Activated CD4-positive, alpha-beta T cell treated with anti-CD3 and anti-CD28 coated beads for 36 hours (primary cell): ENCODE measurements at regions of chr7 and their contacts with region 1.

Region 1: GRCh38 chr7:129144095-129144833 is at the start of gene TSPAN33:
- DNase-seq: peak; percentile 81
- ATAC-seq: peak; percentile 98
- H3K4me3 Mint-ChIP-seq: peak within 1 kb of the TSS; percentile 82
- H3K27ac Mint-ChIP-seq: no peak within 1 kb of the TSS
- H3K4me1 Mint-ChIP-seq: peaks cover 20% of the 10 kb centered on the region
- H3K27me3 Mint-ChIP-seq: peaks cover 16% of the 10 kb centered on the region
- total RNA-seq, gene TSPAN33: 6.5 to 7.5 TPM

Region 2: GRCh38 chr7:128718967-128719642 is 425.2 kb before region 1 on chr7:
- CTCF ChIA-PET with region 1: no interaction called
- POLR2A ChIA-PET with region 1: no interaction called
- intact Hi-C with region 1: no loop called
- DNase-seq: no peak
- ATAC-seq: peak; percentile 39
- H3K4me3 Mint-ChIP-seq: no peak overlapping the region
- H3K27ac Mint-ChIP-seq: no peak overlapping the region
- H3K4me1 Mint-ChIP-seq: peaks cover 3% of the 10 kb centered on the region
- H3K27me3 Mint-ChIP-seq: peaks cover 10% of the 10 kb centered on the region

Region 3: GRCh38 chr7:129122751-129123509 is 21.3 kb before region 1 on chr7:
- CTCF ChIA-PET with region 1: no interaction called
- POLR2A ChIA-PET with region 1: no interaction called
- intact Hi-C with region 1: loop called in 1 of 2 experiments (anchors 1 kb)
- DNase-seq: peak; percentile 71
- ATAC-seq: peak; percentile 78
- H3K4me3 Mint-ChIP-seq: no peak overlapping the region
- H3K27ac Mint-ChIP-seq: peak overlapping the region; percentile 84
- H3K4me1 Mint-ChIP-seq: peaks cover 25% of the 10 kb centered on the region
- H3K27me3 Mint-ChIP-seq: peaks cover 2% of the 10 kb centered on the region

Region 4: GRCh38 chr7:129438839-129439651 is 294.8 kb after region 1 on chr7:
- CTCF ChIA-PET with region 1: no interaction called
- POLR2A ChIA-PET with region 1: no interaction called
- intact Hi-C with region 1: no loop called
- DNase-seq: peak; percentile 82
- ATAC-seq: peak; percentile 70
- H3K4me3 Mint-ChIP-seq: peak overlapping the region; percentile 52
- H3K27ac Mint-ChIP-seq: peak overlapping the region; percentile 95
- H3K4me1 Mint-ChIP-seq: peaks cover 42% of the 10 kb centered on the region
- H3K27me3 Mint-ChIP-seq: no peaks in the 10 kb centered on the region